Activated CD4-positive, alpha-beta T cell treated with anti-CD3 and anti-CD28 coated beads for 36 hours (primary cell): ENCODE measurements at regions of chr6 and their contacts with region 1.

Region 1: GRCh38 chr6:117602151-117602898 is at the start of gene GOPC:
- DNase-seq: peak; percentile 96
- ATAC-seq: peak; percentile 94
- H3K4me3 Mint-ChIP-seq: peak within 1 kb of the TSS; percentile 99
- H3K27ac Mint-ChIP-seq: peak within 1 kb of the TSS; percentile 99
- H3K4me1 Mint-ChIP-seq: peaks cover 30% of the 10 kb centered on the region
- H3K27me3 Mint-ChIP-seq: peaks cover 2% of the 10 kb centered on the region
- total RNA-seq, gene GOPC: 13.3 to 15.5 TPM

Region 2: DNA sequence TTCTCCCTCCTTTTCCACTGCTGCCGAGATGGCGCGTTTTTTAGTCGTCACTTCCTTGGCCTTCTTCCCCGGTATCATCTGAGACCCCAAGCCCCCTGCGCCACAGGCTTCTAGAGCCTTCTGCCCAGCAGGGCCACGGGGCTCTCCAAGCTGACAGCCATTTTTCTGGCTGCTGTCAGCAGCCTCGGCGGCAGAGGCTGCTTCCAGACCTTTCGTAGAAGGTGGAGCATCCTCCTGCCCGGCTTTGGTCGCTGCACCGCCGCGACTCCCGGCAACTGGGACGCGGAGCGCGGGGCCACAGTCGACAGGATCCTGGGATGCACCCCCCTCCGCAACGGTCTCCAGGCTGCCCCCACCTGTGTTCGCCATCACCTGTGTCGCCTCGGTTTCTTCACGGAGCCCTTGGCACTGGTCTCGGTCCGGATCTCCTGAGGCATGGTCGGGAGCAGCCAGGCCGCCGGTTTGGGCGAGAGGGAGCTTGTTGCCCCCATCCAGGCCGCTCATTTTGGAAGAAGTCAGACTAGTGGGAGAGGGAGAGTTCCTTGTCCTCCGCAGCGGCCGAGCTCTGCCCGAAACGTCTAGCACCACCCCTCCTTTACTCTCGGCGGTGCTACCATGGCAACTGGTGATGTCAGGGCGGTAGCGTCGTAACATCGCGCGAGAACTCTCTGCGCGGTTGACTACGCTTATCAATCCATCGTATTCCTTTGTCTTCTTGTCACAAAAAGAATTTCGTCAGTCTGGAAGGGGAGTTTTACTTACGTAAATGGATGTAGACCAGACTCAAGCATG is 1348.6 kb before region 1 on chr6 and contains the start of gene TSPYL4:
- CTCF ChIA-PET with region 1: no interaction called
- POLR2A ChIA-PET with region 1: no interaction called
- intact Hi-C with region 1: loop called in 1 of 2 experiments (anchors 5 kb)
- DNase-seq: peak; percentile 95
- ATAC-seq: peak; percentile 99
- H3K4me3 Mint-ChIP-seq: no peak within 1 kb of the TSS
- H3K27ac Mint-ChIP-seq: no peak within 1 kb of the TSS
- H3K4me1 Mint-ChIP-seq: peaks cover 19% of the 10 kb centered on the region
- H3K27me3 Mint-ChIP-seq: no peaks in the 10 kb centered on the region
- total RNA-seq, gene TSPYL4: 9.4 to 10.8 TPM

Region 3: DNA sequence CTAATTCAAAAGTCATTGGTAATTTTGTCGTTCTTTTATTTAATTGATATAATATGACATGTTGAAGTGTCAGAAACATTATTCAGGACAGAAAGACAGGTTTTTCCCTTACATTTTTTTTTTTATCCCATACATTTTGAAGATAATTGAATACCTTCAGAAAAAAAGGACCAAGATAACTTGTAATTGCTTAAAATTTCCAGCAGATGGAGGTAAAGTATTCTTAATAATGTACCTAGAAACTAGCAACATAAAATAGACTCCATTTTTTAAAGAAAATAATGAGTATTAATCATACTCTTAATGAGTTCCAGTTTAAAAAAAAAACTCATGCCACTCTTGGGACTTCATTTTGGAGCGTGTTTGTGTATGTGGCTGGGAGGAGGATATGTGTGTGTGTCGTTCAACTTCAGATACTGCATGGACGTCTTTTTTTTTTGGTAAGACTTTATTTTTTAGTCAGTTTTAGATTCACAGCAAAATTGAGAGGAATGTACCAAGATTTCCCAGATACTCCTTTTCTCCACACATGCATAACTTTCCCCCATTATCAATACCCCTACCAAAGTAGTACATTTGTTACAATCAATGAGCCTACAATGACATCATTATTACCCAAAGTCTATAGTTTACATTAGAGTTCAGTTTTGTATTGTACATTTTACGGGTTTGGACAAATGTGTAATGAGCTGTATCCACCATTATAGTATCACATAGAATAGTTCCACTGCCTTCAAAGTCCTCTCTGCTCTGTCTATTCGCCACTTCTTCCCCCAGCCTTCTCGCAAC is 256.0 kb before region 1 on chr6:
- CTCF ChIA-PET with region 1: interaction called, 5 read pairs
- POLR2A ChIA-PET with region 1: no interaction called
- intact Hi-C with region 1: loop called (anchors 1 kb)
- DNase-seq: no peak
- ATAC-seq: no peak
- H3K4me3 Mint-ChIP-seq: no peak overlapping the region
- H3K27ac Mint-ChIP-seq: no peak overlapping the region
- H3K4me1 Mint-ChIP-seq: no peaks in the 10 kb centered on the region
- H3K27me3 Mint-ChIP-seq: peaks cover 12% of the 10 kb centered on the region

Region 4: GRCh38 chr6:117547688-117548621 is 54.4 kb before region 1 on chr6:
- CTCF ChIA-PET with region 1: interaction called, 11 read pairs
- POLR2A ChIA-PET with region 1: interaction called, 4 read pairs
- intact Hi-C with region 1: loop called in 1 of 2 experiments (anchors 2 kb)
- DNase-seq: peak; percentile 60
- ATAC-seq: peak; percentile 42
- H3K4me3 Mint-ChIP-seq: peak overlapping the region; percentile 67
- H3K27ac Mint-ChIP-seq: peak overlapping the region; percentile 62
- H3K4me1 Mint-ChIP-seq: peaks cover 39% of the 10 kb centered on the region
- H3K27me3 Mint-ChIP-seq: peaks cover 11% of the 10 kb centered on the region

Region 5: DNA sequence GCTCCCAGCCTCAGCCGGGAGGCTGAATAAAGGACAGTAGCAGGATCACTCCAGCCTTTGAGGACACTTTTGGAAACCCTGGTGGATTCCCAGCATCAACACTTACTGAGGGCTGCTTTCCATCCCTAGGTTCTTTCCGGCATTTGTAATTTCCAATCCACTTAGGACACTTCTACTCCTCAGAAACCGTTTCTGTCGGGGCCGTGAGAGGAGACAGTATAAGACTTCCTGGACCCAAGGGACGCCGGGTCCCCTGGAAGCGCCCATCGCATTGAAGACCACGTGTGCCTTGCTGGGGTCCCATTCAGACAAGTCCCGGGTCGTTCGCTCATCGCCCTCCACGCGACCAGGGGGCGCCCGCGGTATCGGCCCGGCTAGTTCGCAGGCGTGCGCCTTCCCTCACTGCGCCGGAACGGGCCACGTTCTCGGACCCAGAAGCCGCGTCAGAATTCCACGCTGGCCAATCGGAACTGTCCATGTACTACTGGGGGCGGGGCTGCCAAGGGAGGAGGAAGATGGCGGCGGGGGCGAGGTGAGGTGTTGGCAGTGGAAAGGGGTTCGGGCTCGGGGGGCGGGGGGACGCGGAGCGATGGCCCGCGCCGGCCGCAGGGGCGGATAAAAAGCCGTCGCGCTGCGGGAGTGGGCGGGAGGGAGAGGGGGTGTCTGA is 72.8 kb after region 1 on chr6 and contains the start of gene NUS1:
- CTCF ChIA-PET with region 1: interaction called, 5 read pairs
- POLR2A ChIA-PET with region 1: no interaction called
- intact Hi-C with region 1: loop called (anchors 1 kb)
- DNase-seq: peak; percentile 98
- ATAC-seq: peak; percentile 96
- H3K4me3 Mint-ChIP-seq: peak within 1 kb of the TSS; percentile 80
- H3K27ac Mint-ChIP-seq: peak within 1 kb of the TSS; percentile 92
- H3K4me1 Mint-ChIP-seq: peaks cover 46% of the 10 kb centered on the region
- H3K27me3 Mint-ChIP-seq: no peaks in the 10 kb centered on the region
- total RNA-seq, gene NUS1: 34.0 to 38.3 TPM

Region 6: DNA sequence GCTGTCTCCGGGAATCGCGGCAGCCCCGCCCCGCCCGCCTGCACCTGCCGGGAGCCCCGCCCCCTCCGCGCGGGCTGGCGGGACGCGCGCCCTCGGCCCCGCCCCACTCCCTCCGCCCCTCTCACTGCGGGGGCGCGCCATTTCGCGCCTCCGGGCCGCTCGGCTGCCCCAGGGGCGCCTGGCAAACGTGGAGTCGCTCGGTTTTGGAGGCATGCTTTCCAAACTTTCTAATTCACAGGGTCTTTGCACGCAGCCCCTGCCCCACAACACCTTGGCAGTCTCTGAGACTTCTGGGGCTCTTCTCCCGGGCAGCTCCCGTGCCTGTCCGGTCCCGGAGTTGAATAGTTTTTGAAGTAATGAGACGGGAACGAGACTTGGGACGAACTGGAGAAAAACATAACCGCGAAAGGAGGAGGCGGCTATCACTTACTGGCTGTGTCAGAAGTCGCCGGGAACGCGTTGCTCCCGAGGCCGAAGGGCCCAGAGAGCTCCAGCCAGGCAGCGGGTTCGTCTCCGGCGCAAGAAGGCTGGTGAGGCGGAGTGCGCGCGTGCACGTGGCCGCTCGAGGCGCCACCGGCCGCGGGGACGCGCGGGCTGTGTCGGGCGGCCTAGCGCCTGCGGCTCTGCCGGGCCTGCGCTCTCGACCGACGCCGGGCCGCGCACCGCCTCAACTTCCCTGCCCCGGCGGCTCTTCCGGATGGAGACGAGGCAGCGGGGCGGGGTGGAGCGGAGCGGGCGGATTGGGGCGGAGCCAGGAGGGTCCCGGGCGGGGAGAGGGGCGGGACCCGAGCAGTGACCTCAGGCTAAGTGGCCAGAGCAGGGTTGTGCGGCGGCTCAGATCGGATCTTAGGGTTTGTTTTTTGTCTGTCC is 1332.4 kb after region 1 on chr6 and contains the start of gene MCM9:
- CTCF ChIA-PET with region 1: no interaction called
- POLR2A ChIA-PET with region 1: no interaction called
- intact Hi-C with region 1: loop called in 1 of 2 experiments (anchors 2 kb)
- DNase-seq: peak; percentile 94
- ATAC-seq: peak; percentile 97
- H3K4me3 Mint-ChIP-seq: peak within 1 kb of the TSS; percentile 87
- H3K27ac Mint-ChIP-seq: peak within 1 kb of the TSS; percentile 94
- H3K4me1 Mint-ChIP-seq: peaks cover 35% of the 10 kb centered on the region
- H3K27me3 Mint-ChIP-seq: no peaks in the 10 kb centered on the region
- total RNA-seq, gene MCM9: 17.0 to 17.2 TPM